Activated CD8-positive, alpha-beta T cell treated with anti-CD3 and anti-CD28 coated beads for 36 hours (primary cell): ENCODE measurements at regions of chr18 and their contacts with region 1.

Region 1: GRCh38 chr18:12338382-12338781 is 30.3 kb downstream of the TUBB6 start:
- DNase-seq: no peak
- ATAC-seq: no peak
- H3K4me3 Mint-ChIP-seq: no peak overlapping the region
- H3K27ac Mint-ChIP-seq: no peak overlapping the region
- H3K4me1 Mint-ChIP-seq: no peaks in the 10 kb centered on the region
- H3K27me3 Mint-ChIP-seq: no peaks in the 10 kb centered on the region
- CTCF ChIP-seq: no peak

Region 2: DNA sequence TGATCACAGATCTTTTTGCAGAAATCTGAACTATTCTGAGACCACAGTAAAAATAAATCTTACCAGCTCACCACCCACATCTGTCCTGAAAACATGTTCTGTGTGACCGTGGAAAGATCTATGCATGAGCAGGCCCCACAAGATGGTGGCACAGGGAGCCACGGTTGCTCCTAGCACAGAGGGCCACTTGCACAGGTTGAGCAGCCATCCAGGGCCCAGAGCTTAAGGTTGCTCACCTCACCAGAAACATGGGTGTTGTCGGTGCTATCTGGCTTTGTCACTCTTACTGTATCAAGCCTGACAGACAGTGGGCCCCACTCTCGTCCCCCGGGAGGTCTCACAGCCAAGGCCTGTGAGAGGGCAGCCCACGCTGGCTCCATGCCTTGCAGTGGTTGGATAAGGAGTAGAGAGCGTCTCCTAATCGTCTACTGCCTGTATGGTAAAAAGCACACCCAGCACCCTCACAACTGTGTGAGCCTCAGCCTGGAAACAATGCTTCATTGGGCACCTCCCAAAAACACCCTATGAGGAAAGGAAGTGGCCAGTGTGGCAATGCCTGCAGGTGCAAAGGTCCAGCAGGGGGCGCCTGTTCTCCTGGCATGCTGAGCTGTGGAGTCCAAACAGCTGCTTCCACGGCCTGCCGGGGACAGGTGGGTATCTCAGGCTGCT is 10.7 kb before region 1 on chr18:
- CTCF ChIA-PET with region 1: interaction called, 12 read pairs
- POLR2A ChIA-PET with region 1: no interaction called
- intact Hi-C with region 1: no loop called
- DNase-seq: peak; percentile 89
- ATAC-seq: peak; percentile 97
- H3K4me3 Mint-ChIP-seq: no peak overlapping the region
- H3K27ac Mint-ChIP-seq: no peak overlapping the region
- H3K4me1 Mint-ChIP-seq: peaks cover 7% of the 10 kb centered on the region
- H3K27me3 Mint-ChIP-seq: no peaks in the 10 kb centered on the region
- CTCF ChIP-seq: peak; percentile 74

Region 3: GRCh38 chr18:12455496-12455895 is 117.1 kb after region 1 on chr18:
- CTCF ChIA-PET with region 1: no interaction called
- POLR2A ChIA-PET with region 1: no interaction called
- intact Hi-C with region 1: no loop called
- DNase-seq: no peak
- ATAC-seq: no peak
- H3K4me3 Mint-ChIP-seq: no peak overlapping the region
- H3K27ac Mint-ChIP-seq: no peak overlapping the region
- H3K4me1 Mint-ChIP-seq: no peaks in the 10 kb centered on the region
- H3K27me3 Mint-ChIP-seq: no peaks in the 10 kb centered on the region
- CTCF ChIP-seq: no peak